CD8-positive, alpha-beta T cell (primary cell): ENCODE measurements at regions of chr22 and their contacts with region 1.

Region 1: DNA sequence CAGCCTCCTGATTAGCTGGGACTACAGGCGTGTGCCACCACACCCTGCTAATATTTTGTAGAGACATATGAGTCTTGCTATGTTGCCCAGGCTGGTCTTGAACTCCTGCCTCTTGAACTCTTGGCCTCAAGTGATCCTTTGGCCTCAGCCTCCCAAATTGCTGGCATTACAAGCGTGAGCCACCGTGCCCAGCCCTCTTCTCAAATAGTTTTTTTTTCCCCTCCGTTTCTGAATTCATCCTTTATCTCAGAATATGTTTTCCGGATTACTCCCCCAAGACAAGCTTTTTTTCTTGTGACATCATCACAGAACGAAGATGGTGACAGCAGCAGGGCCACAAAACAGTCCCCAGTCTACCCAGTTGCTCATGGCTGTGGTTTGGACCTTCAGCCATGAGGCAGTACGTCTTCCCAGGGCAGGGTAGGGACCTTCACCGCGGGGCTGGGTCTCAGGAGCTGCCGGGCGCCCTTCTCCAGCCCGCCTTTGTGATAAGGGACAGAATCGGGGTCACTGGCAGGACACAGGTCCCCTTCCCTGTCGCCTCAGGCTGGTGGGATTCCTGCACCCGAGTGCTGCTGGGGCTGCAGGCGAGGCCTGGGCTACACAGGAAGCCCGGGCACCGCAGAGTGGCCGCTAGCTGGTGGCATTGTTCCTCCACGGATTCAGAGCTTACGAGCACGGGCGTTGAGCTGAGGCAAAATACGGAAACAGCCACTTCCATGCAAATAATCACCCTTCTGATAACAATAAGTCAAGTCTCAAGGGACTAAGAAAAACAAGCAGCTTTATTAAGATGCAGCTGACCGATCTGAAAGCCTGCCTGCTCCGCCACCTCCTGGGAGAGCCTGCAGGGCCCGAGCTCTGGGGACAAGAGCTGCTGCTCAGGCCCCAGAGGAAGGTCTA is 12.1 kb downstream of the TBX1 start:
- DNase-seq: no peak
- ATAC-seq: no peak
- H3K4me3 ChIP-seq: no peak overlapping the region
- H3K4me3 Mint-ChIP-seq: no peak overlapping the region
- H3K27ac ChIP-seq: no peak overlapping the region
- H3K27ac Mint-ChIP-seq: no peak overlapping the region
- H3K4me1 ChIP-seq: peaks cover 14% of the 10 kb centered on the region
- H3K4me1 Mint-ChIP-seq: peaks cover 11% of the 10 kb centered on the region
- H3K27me3 ChIP-seq: peaks cover 15 to 25% of the 10 kb centered on the region in 2 experiments
- H3K27me3 Mint-ChIP-seq: peaks cover 68% of the 10 kb centered on the region
- CTCF ChIP-seq: no peak

Region 2: DNA sequence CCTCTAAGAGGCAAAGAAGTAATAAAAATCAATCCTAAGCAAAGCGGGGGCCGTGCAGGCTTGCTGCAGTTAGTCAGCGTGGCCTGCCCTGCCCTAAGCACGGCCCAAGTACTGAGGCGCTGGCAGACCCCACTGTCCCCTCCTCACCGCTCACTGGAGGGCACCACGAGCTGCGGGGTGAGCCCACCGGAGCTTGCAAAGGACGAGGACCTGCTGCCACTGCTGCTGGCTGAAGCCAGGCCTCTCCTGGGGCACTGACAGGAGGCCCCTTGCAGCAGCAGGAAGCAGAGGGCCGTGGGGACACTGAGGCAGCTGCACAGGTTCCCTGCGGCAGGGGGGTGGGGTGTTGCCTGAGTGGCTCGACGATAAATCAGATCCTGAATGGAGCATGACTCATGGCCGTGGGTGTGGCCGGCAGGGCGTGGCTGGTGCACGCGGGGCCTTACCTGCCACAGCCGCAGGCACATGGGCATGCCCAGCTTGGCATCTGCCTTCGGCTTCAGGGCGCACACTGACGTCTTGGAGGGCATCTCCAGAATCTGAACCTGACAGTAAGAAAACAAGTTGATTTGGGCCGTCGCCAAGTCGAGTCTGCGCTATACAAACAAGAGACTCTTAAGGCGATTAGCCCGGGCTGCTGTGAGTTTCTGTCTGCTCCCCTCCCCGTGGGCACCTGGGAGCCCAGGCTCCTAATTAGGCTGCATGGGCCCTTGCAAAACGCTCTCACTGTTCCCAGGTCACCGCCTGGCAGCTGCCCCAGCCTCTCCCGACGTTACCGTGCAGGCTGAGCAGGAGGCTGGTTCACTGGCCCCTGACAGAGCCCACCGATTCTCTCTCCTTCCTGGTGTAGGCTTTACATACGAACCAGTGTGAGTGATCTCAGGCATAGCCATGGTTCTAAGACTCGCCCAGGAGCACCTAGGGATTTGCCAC is 33.8 kb after region 1 on chr22:
- CTCF ChIA-PET with region 1: no interaction called
- POLR2A ChIA-PET with region 1: no interaction called
- intact Hi-C with region 1: no loop called
- DNase-seq: no peak
- ATAC-seq: no peak
- H3K4me3 ChIP-seq: no peak overlapping the region
- H3K4me3 Mint-ChIP-seq: no peak overlapping the region
- H3K27ac ChIP-seq: no peak overlapping the region
- H3K27ac Mint-ChIP-seq: no peak overlapping the region
- H3K4me1 ChIP-seq: peaks cover 13% of the 10 kb centered on the region
- H3K4me1 Mint-ChIP-seq: peaks cover 2% of the 10 kb centered on the region
- H3K27me3 ChIP-seq: no peaks in the 10 kb centered on the region
- H3K27me3 Mint-ChIP-seq: no peaks in the 10 kb centered on the region
- CTCF ChIP-seq: no peak

Region 3: GRCh38 chr22:19832476-19833108 is 59.9 kb after region 1 on chr22:
- CTCF ChIA-PET with region 1: interaction called, 3 read pairs
- POLR2A ChIA-PET with region 1: no interaction called
- intact Hi-C with region 1: loop called in 1 of 2 experiments (anchors 10 kb)
- DNase-seq: peak in 1 of 9 experiments; percentile 43
- ATAC-seq: no peak
- H3K4me3 ChIP-seq: no peak overlapping the region
- H3K4me3 Mint-ChIP-seq: no peak overlapping the region
- H3K27ac ChIP-seq: no peak overlapping the region
- H3K27ac Mint-ChIP-seq: peak overlapping the region; percentile 10
- H3K4me1 ChIP-seq: no peaks in the 10 kb centered on the region
- H3K4me1 Mint-ChIP-seq: peaks cover 22% of the 10 kb centered on the region
- H3K27me3 ChIP-seq: no peaks in the 10 kb centered on the region
- H3K27me3 Mint-ChIP-seq: no peaks in the 10 kb centered on the region
- CTCF ChIP-seq: no peak